ENCODE measurements at regions of chr5 and their contacts with region 1.

Region 1: DNA sequence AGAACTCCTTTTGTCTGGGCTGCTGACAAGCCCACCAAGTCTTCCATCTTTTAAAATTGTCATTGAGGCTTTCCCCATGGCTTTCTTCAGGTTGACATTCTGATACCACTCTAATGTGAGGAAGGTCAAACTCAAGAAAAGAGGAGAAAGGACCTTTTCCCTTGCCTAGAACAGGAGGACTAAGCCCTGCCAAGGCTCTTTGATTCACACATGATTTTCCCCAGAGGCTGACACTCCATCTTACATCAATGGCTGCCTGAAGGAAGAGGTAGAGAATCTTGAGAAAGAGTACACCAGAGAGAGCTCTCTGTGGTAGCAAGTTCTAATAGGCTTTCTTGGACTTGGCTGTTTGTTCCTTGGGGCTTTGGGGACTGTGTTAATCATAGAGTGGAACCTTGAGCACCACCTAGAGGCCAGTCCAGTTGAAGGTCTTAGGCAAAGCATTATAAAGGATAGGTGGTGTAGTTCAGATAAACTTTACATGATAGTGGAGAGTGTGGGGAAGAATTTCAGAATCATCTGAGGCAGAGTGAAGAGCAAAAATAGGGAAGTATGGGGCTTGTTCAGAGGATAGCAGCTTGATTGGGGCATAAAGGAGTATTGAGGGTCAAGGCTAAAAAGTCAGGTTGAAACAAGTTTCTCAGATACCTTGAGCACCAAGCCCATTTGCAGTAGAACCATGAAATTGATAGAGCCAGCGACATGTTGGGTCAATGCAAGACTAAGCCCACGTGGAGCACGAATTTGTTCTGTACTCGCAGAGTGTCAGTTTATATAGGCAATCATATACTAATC is 36.7 kb downstream of the NDFIP1 start:
- DNase-seq: peak; percentile 17 to 70 (median 35)
- H3K4me3 ChIP-seq: no peak overlapping the region
- H3K4me3 Mint-ChIP-seq: no peak overlapping the region
- H3K27ac ChIP-seq: no peak overlapping the region
- H3K27ac Mint-ChIP-seq: peak overlapping the region in 1 of 8 donors; percentile 42
- H3K4me1 ChIP-seq: no peaks in the 10 kb centered on the region
- H3K4me1 Mint-ChIP-seq: peaks cover 0 to 4% (median 0%) of the 10 kb centered on the region in 3 donors
- H3K27me3 ChIP-seq: no peaks in the 10 kb centered on the region
- H3K27me3 Mint-ChIP-seq: no peaks in the 10 kb centered on the region

Region 2: DNA sequence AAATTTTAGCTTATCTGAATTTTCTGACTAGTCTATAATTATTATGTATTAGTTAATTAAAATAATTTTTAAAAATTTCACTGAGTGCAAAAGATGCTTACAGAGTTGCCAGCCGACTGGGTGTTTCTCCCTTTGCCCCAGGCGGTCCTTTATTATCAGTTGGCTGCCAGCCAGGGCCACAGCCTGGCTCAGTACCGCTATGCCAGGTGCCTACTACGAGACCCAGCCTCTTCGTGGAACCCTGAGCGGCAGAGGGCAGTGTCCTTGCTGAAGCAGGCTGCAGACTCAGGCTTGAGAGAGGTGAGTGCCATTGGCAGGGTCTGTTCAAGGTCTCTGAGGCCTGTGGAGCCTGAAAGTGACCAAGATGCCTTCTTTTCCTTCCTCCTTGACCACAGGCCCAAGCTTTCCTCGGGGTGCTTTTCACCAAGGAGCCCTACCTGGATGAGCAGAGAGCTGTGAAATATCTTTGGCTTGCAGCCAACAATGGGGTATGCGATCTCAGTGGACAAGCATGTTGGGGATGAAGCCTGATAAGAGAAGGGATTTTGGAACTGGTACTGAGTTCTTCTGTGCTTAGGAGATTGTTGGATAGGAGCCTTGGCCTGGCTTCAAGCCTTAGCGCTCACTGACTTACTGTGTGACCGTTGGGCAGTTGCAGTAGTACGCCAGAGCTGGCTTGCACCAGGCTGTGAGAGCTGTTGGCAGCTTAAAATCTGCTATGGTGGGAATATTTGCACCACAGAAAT is 211.0 kb before region 1 on chr5:
- CTCF ChIA-PET with region 1: no interaction called
- POLR2A ChIA-PET with region 1: no interaction called
- DNase-seq: no peak
- H3K4me3 ChIP-seq: no peak overlapping the region
- H3K4me3 Mint-ChIP-seq: no peak overlapping the region
- H3K27ac ChIP-seq: no peak overlapping the region
- H3K27ac Mint-ChIP-seq: peak overlapping the region in 2 of 8 donors; percentile 37 to 55
- H3K4me1 ChIP-seq: no peaks in the 10 kb centered on the region
- H3K4me1 Mint-ChIP-seq: peaks cover 0 to 5% (median 4%) of the 10 kb centered on the region in 3 donors
- H3K27me3 ChIP-seq: no peaks in the 10 kb centered on the region
- H3K27me3 Mint-ChIP-seq: no peaks in the 10 kb centered on the region

Region 3: DNA sequence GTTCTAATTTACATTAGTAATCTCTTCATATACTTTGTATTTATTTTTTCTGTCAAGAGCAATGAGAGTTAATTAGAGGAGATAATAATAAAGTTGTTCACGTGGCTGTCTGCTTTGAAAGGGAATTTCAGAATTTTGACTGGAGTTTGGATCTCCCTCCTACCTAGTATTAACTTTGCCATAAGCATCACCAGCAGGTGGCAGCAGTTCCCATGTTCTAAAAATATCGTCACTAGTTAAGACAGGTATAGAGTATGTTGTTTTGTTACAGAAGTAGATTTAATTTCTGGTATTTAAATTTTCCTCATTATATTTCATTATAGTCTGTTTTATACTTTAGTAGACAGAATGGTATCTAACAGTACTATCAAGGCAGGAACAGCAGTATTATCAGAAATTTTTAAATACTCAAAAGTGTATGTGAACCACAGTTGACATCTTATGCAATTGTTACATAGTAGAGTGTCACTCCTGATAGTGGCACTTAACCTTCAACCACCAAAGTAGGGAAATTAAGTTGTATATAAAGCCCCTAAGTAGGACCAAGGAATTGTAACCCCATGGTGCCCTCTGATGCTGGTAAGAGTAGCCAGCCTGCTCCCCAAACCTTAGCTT is 152.8 kb before region 1 on chr5:
- CTCF ChIA-PET with region 1: interaction called, 80 read pairs
- POLR2A ChIA-PET with region 1: interaction called, 3 read pairs
- DNase-seq: peak; percentile 53 to 80 (median 68)
- H3K4me3 ChIP-seq: no peak overlapping the region
- H3K4me3 Mint-ChIP-seq: no peak overlapping the region
- H3K27ac ChIP-seq: no peak overlapping the region
- H3K27ac Mint-ChIP-seq: peak overlapping the region in 2 of 8 donors; percentile 0 to 11
- H3K4me1 ChIP-seq: peaks cover 9% of the 10 kb centered on the region
- H3K4me1 Mint-ChIP-seq: peaks cover 3 to 14% (median 5%) of the 10 kb centered on the region in 3 donors
- H3K27me3 ChIP-seq: no peaks in the 10 kb centered on the region
- H3K27me3 Mint-ChIP-seq: peaks cover 0 to 1% of the 10 kb centered on the region in 2 donors

Region 4: DNA sequence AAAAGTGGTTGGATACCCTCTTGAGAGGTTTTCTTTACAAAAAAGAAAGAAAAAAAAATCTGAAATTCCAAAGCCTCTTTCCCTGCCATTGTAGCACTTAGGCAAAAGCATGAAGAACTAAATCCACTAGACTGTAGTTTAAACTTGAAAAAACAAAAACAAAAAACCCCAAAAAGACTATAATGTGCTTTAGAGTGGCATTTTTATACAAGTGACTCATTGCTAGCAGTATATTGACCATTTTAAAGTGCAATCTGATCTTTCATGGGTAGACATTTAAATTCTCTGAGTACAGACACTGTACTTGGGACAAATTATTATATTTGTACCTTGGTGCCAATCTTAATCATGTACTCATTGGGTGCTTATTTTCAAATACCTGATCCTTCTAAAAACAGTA is 14.1 kb after region 1 on chr5:
- CTCF ChIA-PET with region 1: no interaction called
- POLR2A ChIA-PET with region 1: no interaction called
- DNase-seq: no peak
- H3K4me3 ChIP-seq: no peak overlapping the region
- H3K4me3 Mint-ChIP-seq: no peak overlapping the region
- H3K27ac ChIP-seq: no peak overlapping the region
- H3K27ac Mint-ChIP-seq: peak overlapping the region in 1 of 8 donors; percentile 9
- H3K4me1 ChIP-seq: no peaks in the 10 kb centered on the region
- H3K4me1 Mint-ChIP-seq: peaks cover 0 to 5% (median 4%) of the 10 kb centered on the region in 3 donors
- H3K27me3 ChIP-seq: no peaks in the 10 kb centered on the region
- H3K27me3 Mint-ChIP-seq: no peaks in the 10 kb centered on the region

Region 5: DNA sequence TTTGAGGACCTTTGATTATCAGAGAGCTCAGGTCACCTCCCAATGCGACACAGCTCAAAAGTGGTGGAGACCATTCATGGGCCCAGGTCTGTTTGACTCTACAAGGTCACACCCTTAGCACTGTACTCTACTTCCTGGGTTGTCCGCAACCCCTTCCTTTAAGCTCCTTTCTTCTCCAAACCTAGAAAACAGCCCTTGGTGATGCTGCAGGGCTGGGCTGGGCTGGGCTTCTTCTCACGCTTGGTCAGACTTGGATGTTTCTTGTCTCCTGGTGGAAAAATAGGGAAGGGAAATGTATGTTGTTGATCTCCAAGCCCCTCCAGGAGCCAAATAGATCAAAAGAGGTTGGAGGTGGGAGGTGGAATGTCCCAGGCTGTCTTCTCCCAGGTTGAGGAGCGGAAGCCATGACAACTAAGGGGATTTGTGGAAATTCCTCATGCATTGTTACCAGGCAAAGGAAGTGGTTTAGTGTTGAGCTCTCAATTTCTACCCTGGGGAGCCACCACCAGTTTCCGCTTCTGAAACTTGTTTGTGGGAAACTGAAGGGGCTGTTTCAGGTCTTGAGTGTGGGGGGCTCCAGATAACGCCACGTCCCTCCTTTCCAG is 100.4 kb after region 1 on chr5:
- CTCF ChIA-PET with region 1: no interaction called
- POLR2A ChIA-PET with region 1: no interaction called
- DNase-seq: no peak
- H3K4me3 ChIP-seq: no peak overlapping the region
- H3K4me3 Mint-ChIP-seq: no peak overlapping the region
- H3K27ac ChIP-seq: no peak overlapping the region
- H3K27ac Mint-ChIP-seq: no peak overlapping the region
- H3K4me1 ChIP-seq: no peaks in the 10 kb centered on the region
- H3K4me1 Mint-ChIP-seq: no peaks in the 10 kb centered on the region
- H3K27me3 ChIP-seq: no peaks in the 10 kb centered on the region
- H3K27me3 Mint-ChIP-seq: peaks cover 3 to 9% of the 10 kb centered on the region in 2 donors

Measured in CD8-positive, alpha-beta memory T cell (primary cell).